Activated naive CD4-positive, alpha-beta T cell treated with anti-CD3 and anti-CD28 coated beads for 36 hours (primary cell): ENCODE measurements at regions of chr9 and their contacts with region 1.

Region 1: GRCh38 chr9:113682297-113682771 is 193.8 kb upstream of the ZNF618 start:
- DNase-seq: peak; percentile 72
- H3K4me3 Mint-ChIP-seq: no peak overlapping the region
- H3K27ac Mint-ChIP-seq: no peak overlapping the region
- H3K4me1 Mint-ChIP-seq: no peaks in the 10 kb centered on the region
- H3K27me3 Mint-ChIP-seq: peaks cover 47% of the 10 kb centered on the region

Region 2: DNA sequence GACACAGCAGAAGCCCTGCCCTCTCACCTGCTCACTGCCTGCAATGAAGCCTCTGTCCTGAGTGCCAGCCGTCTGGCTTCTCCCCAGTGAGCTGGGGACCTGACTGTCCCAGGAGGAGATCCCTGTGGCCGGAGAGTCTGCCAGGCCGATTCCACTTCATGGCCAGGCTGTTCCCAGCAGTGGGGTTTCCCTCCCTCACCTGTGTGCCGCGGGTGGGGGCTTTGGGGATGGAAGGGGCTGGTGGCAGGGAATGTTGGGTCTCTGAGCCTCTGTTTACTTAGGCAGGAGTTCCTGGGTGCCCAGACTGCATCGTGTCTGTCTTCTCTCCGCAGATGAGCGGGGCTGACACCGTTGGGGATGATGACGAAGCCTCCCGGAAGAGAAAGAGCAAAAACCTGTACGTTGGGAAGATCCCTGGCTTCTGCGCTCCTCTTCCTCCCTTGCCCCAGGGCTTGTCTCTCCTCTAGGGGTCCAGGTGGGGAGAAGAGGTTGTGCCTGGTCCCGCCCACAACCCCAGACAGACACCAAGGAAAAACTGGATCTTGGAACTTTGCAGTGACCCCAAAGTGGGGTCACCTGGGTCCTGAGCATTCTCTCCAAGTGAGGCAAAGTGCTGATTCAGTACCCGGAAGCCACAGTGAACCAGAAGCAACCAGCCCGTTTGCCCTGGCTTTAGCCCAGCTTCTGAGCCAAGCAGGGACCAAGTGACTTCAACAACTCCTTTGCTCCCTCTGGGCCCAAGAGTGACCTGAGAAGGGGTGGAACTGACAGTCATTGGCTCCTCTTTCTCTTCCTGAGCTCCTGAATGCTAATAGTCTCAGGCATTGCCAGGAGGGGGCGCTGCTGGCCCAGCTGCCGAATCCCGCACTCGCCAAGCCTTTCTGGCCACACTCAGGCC is 91.1 kb before region 1 on chr9:
- CTCF ChIA-PET with region 1: no interaction called
- intact Hi-C with region 1: no loop called
- DNase-seq: peak; percentile 85
- H3K4me3 Mint-ChIP-seq: no peak overlapping the region
- H3K27ac Mint-ChIP-seq: no peak overlapping the region
- H3K4me1 Mint-ChIP-seq: peaks cover 37% of the 10 kb centered on the region
- H3K27me3 Mint-ChIP-seq: no peaks in the 10 kb centered on the region

Region 3: GRCh38 chr9:113876151-113876992 is 194.0 kb after region 1 on chr9 and contains the start of gene ZNF618:
- CTCF ChIA-PET with region 1: no interaction called
- intact Hi-C with region 1: loop called (anchors 1 kb)
- DNase-seq: no peak
- H3K4me3 Mint-ChIP-seq: peak within 1 kb of the TSS; percentile 80
- H3K27ac Mint-ChIP-seq: no peak within 1 kb of the TSS
- H3K4me1 Mint-ChIP-seq: peaks cover 4% of the 10 kb centered on the region
- H3K27me3 Mint-ChIP-seq: peaks cover 14% of the 10 kb centered on the region
- total RNA-seq, gene ZNF618: 0.02 to 0.10 TPM

Region 4: DNA sequence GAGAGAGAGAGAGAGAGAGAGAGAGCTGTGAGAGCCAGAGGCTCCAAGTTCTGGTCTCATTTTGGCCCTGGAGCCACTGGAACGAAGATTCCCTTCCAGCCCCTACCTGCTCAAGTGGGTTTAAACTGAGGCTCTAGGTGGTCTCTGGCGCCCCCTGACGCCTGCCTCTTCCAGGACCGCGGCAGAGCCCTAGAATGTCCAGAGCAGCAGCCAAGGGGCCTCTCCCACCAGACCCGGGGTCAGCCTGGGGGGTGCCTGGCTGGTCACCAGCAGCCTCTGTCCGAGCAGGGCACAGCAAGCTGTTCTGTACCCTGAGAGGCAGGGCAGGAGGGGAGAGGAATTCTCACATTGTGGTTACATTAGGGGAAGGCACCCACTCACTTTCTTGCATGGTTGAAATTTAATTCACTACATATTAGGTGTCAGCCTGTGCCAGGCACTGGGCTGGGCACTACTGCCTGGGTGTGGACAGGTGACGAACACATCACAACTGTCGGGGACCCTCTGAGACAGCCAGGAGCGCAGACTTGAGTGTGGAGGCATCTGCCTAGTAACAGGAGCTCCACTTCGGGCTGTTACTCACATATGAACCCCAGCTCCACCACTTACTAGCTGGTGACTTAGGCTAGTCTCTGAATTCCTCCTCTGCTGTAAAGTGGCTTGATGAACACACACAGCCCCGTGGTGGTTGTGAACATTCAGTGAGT is 351.2 kb after region 1 on chr9:
- CTCF ChIA-PET with region 1: no interaction called
- intact Hi-C with region 1: loop called (anchors 2 kb)
- DNase-seq: peak; percentile 15
- H3K4me3 Mint-ChIP-seq: no peak overlapping the region
- H3K27ac Mint-ChIP-seq: no peak overlapping the region
- H3K4me1 Mint-ChIP-seq: no peaks in the 10 kb centered on the region
- H3K27me3 Mint-ChIP-seq: no peaks in the 10 kb centered on the region